Right lobe of liver (tissue), 6 donors: ENCODE measurements at regions of chr22 and their contacts with region 1.

Region 1: DNA sequence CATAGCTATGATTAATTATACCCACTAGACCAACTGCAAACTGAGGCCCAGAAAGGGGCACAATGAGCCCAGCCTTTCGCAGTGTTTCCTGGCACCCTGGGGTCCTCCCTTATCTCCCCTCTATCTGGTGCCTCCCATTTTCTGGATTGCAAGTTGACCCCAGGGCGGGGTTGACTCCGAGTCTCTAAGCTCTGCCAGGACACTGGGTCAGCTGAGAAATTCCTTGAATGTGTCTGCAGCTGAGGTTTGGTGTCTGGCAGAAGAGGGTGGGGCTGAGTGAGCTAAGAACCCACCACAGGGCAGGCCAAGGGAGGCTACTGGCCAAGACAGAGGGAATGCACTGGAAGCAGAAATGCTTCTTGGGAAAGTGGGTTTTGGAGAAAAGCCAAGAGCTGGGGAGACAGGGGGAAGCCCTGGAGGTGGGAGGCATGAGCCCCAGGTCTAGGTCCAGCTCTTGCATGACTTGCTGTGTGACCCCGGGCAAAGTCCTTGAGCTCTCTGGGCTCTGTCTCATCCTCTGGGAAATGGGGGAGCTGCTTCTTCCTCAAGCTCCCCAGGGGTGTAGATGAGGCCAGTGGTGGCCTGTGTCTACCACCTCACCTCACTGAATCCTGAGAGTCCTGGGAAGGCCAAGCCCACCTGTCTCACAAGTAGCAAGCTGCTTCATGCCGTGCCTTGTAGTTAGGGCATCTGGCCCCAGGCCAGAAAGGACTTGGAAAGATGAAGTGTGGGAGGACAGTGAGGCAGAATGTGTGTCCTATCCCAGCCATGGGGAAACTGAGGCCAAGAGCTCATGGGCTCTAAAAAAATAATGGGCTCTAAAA is 2.3 kb downstream of the MMP11 start:
- DNase-seq: no peak
- ATAC-seq: no peak
- H3K4me3 ChIP-seq: no peak overlapping the region
- H3K27ac ChIP-seq: no peak overlapping the region
- H3K4me1 ChIP-seq: peaks cover 0 to 9% (median 2%) of the 10 kb centered on the region in 4 donors
- H3K27me3 ChIP-seq: no peaks in the 10 kb centered on the region
- CTCF ChIP-seq: no peak
- POLR2A ChIP-seq: no peak

Region 2: GRCh38 chr22:23841736-23842445 is 66.9 kb after region 1 on chr22:
- intact Hi-C with region 1: loop called (anchors 5 kb)
- DNase-seq: no peak
- ATAC-seq: no peak
- H3K4me3 ChIP-seq: no peak overlapping the region
- H3K27ac ChIP-seq: no peak overlapping the region
- H3K4me1 ChIP-seq: peaks cover 0 to 7% (median 0%) of the 10 kb centered on the region in 4 donors
- H3K27me3 ChIP-seq: no peaks in the 10 kb centered on the region
- CTCF ChIP-seq: no peak
- POLR2A ChIP-seq: no peak

Region 3: DNA sequence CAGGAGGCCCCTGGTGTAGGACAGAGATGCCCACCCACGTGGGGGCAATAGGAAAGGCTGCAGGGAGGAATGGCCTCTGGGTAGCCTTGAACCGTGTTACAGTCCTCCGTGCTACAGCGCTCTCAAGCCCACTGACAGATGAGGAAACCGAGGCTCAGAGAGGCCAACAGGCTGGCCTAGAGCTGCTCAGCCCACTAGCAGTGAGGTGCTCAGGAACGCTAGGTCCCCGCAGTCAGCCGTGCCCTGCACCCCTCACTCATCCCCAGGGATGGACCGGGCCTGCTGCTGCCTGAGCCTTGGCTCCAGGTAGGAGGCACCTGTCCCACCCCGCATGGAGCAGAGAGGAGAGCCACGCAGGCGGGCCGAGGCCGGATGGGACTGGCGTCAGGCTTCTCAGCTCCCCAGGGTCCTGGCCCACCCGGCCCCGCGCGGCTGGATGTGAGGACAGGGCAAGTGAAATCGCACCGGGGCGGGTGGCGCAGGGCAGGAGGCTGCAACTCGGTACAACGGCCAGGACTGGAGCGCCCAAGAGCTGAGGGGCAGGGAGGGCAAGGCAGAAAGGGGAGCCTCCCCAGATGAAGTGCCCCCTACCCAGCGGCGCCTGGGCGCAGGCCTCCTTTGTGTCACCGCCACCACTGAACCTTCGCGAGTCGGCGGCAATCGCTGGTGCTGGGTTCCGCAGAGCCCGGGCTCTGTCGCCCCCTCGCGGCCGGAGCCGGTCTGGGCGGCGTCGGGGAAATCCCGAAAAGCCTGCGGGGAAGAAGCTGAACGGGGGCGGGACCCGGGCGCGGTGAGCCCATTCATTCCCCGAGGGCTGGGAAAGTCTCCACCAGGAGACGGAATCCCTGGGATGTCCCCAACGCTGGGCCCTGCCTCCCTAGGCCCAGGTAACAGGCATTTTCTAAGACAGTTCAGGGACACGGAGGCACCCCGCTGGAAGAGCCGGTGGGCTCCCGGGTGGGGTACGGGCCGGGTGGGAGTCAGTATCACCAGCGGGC is 74.4 kb after region 1 on chr22:
- intact Hi-C with region 1: loop called (anchors 5 kb)
- DNase-seq: peak; percentile 84 to 86 (median 85)
- ATAC-seq: peak; percentile 86 to 95 (median 91)
- H3K4me3 ChIP-seq: peak overlapping the region; percentile 29 to 41 (median 32)
- H3K27ac ChIP-seq: no peak overlapping the region
- H3K4me1 ChIP-seq: peaks cover 0 to 11% (median 0%) of the 10 kb centered on the region in 4 donors
- H3K27me3 ChIP-seq: no peaks in the 10 kb centered on the region
- CTCF ChIP-seq: peak in 3 of 4 donors; percentile 98 to 99 (median 98)
- POLR2A ChIP-seq: no peak